ENCODE measurements at regions of chrX and their contacts with region 1.

Region 1: DNA sequence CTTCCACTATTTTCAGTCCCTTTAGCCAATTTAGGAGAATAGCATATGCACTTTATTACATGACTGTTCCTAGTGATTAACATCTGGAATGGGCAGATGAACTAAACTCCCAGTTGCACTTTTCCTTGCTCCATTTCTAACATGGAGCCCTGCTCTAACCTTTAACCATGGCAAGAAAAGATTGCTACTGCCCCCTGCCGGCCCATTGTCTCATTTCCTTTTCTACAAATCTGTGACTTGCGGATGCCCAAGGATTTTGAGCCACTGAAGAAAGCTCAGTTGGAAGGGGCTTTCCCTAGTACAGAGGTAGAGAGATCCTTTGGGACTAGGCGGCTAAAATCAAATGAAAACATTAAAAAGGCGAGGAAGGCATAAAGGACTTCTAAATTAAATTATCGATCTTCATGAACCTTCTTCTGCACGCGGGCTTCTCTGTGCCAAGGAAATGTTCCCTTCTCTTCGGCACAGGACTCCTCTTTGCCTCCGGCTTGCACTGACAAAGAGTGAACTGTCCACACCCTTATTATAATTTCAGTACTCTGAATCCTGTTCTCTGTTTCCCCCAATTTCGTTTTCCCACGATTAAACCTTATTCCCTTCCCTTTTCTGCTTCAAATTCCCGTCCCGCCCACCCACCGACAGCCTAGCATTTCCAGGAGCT is 577 bp upstream of the GLRA2 start:
- DNase-seq: peak; percentile 74
- H3K4me3 Mint-ChIP-seq: peak overlapping the region; percentile 61
- H3K27ac Mint-ChIP-seq: no peak overlapping the region
- H3K4me1 Mint-ChIP-seq: peaks cover 5% of the 10 kb centered on the region
- H3K27me3 Mint-ChIP-seq: peaks cover 15% of the 10 kb centered on the region
- CTCF ChIP-seq: peak; percentile 55

Region 2: GRCh38 chrX:14039344-14039743 is 489.4 kb before region 1 on chrX:
- CTCF ChIA-PET with region 1: interaction called, 4 read pairs
- POLR2A ChIA-PET with region 1: no interaction called
- intact Hi-C with region 1: loop called (anchors 1 kb)
- DNase-seq: peak; percentile 75
- H3K4me3 Mint-ChIP-seq: no peak overlapping the region
- H3K27ac Mint-ChIP-seq: no peak overlapping the region
- H3K4me1 Mint-ChIP-seq: no peaks in the 10 kb centered on the region
- H3K27me3 Mint-ChIP-seq: peaks cover 81% of the 10 kb centered on the region
- CTCF ChIP-seq: peak; percentile 81

Region 3: DNA sequence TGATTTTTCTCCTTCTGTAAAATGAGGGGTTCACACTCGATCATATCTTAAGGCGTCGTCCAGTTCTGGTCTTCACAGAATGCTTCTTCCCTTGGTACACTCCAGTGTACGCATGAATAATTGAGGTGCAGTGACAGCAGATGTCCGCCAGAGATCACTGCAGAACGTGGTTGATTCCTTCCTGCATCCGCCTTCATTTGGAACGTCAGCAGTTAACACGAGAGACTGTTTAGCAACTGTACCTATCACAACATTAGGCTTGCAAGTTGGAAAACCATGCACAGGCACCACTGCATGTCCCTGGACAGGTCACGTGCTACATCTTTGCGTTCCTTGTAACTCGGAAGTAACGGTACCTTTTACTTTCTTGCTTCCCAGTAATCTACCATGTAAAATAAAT is 433.1 kb before region 1 on chrX:
- CTCF ChIA-PET with region 1: interaction called, 13 read pairs
- POLR2A ChIA-PET with region 1: no interaction called
- intact Hi-C with region 1: loop called (anchors 1 kb)
- DNase-seq: peak; percentile 82
- H3K4me3 Mint-ChIP-seq: no peak overlapping the region
- H3K27ac Mint-ChIP-seq: no peak overlapping the region
- H3K4me1 Mint-ChIP-seq: no peaks in the 10 kb centered on the region
- H3K27me3 Mint-ChIP-seq: peaks cover 80% of the 10 kb centered on the region
- CTCF ChIP-seq: peak; percentile 79

Region 4: DNA sequence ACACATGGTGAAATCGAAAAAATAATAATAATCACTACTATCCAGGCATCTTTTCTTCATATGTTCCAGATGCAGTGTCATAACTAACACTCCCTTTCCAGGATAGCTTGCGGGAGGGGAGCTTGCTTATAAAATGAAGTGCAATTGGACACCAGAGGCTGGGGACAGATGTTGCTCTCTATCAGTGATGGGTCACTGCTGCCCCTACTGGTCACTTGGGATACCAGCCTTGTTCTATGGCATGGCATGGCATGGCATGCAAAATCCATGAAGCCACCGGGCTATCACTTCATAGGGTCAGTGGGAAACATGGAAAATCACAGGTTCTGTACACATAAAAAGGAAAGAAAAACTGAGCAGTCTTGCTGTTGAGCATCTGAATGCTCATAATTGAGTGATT is 168.7 kb after region 1 on chrX:
- CTCF ChIA-PET with region 1: no interaction called
- POLR2A ChIA-PET with region 1: no interaction called
- intact Hi-C with region 1: loop called (anchors 5 kb)
- DNase-seq: peak; percentile 74
- H3K4me3 Mint-ChIP-seq: no peak overlapping the region
- H3K27ac Mint-ChIP-seq: no peak overlapping the region
- H3K4me1 Mint-ChIP-seq: no peaks in the 10 kb centered on the region
- H3K27me3 Mint-ChIP-seq: peaks cover 23% of the 10 kb centered on the region
- CTCF ChIP-seq: peak; percentile 53